PC-9 (cell line): ENCODE measurements at regions of chr2 and their contacts with region 1.

Region 1: GRCh38 chr2:181953881-181954537 is 31.6 kb upstream of the PPP1R1C start:
- DNase-seq: peak in 1 of 2 experiments; percentile 80
- H3K4me3 ChIP-seq: no peak overlapping the region
- H3K27ac ChIP-seq: no peak overlapping the region
- H3K4me1 ChIP-seq: peaks cover 18% of the 10 kb centered on the region
- H3K27me3 ChIP-seq: no peaks in the 10 kb centered on the region
- CTCF ChIP-seq: peak; percentile 69

Region 2: GRCh38 chr2:180742809-180743208 is 1211.2 kb before region 1 on chr2:
- CTCF ChIA-PET with region 1: no interaction called
- POLR2A ChIA-PET with region 1: no interaction called
- intact Hi-C with region 1: loop called (anchors 10 kb)
- DNase-seq: peak; percentile 32 to 81
- H3K4me3 ChIP-seq: 0 out of 2 replicates have a peak overlapping the region, but pooled peaks have one; percentile 4
- H3K27ac ChIP-seq: peak overlapping the region; percentile 11
- H3K4me1 ChIP-seq: peaks cover 29% of the 10 kb centered on the region
- H3K27me3 ChIP-seq: no peaks in the 10 kb centered on the region
- CTCF ChIP-seq: no peak

Region 3: DNA sequence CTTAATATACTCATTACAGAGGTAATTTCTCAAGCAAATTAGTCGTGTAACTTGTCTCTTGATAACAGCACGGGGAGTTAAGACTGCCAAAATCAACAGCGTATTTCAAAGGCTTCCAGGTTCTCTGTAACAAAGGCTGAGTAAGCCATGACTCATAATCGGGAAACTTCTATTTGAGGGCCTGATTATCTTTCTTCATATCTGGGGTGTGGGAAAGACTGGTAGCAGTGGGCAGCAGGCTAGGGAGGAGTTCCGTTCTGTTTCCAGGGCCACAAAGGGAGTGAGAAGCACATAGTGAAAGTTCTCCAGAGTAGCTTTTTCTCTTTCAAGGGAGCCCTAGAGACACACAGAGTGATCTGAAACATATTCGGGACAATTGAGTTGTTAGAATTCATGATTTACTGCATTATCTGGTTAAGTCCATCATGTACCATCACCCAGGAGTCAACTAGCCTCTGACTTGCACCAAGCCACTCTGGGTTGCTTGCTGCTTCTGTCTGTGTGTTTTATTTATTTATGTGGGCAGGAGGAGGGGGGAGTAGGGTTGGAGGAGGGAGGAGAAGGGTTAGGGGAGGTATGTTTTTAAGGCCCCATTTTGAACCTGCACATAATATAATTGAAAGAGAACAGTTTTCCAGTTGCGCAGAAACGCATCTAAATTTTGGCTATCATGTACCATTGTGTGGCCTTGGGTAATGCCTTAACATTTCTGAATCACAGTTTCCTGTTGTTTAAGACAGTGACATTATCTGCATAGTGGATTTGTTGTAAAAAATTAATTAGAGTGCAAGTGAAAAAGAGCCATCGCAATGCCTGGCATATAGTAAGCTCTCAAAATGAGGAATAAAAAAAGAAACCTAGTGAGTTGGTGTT is 142.9 kb before region 1 on chr2:
- CTCF ChIA-PET with region 1: no interaction called
- POLR2A ChIA-PET with region 1: no interaction called
- intact Hi-C with region 1: loop called (anchors 1 kb)
- DNase-seq: peak; percentile 81 to 98
- H3K4me3 ChIP-seq: no peak overlapping the region
- H3K27ac ChIP-seq: peak overlapping the region; percentile 74
- H3K4me1 ChIP-seq: peaks cover 32% of the 10 kb centered on the region
- H3K27me3 ChIP-seq: no peaks in the 10 kb centered on the region
- CTCF ChIP-seq: no peak

Region 4: DNA sequence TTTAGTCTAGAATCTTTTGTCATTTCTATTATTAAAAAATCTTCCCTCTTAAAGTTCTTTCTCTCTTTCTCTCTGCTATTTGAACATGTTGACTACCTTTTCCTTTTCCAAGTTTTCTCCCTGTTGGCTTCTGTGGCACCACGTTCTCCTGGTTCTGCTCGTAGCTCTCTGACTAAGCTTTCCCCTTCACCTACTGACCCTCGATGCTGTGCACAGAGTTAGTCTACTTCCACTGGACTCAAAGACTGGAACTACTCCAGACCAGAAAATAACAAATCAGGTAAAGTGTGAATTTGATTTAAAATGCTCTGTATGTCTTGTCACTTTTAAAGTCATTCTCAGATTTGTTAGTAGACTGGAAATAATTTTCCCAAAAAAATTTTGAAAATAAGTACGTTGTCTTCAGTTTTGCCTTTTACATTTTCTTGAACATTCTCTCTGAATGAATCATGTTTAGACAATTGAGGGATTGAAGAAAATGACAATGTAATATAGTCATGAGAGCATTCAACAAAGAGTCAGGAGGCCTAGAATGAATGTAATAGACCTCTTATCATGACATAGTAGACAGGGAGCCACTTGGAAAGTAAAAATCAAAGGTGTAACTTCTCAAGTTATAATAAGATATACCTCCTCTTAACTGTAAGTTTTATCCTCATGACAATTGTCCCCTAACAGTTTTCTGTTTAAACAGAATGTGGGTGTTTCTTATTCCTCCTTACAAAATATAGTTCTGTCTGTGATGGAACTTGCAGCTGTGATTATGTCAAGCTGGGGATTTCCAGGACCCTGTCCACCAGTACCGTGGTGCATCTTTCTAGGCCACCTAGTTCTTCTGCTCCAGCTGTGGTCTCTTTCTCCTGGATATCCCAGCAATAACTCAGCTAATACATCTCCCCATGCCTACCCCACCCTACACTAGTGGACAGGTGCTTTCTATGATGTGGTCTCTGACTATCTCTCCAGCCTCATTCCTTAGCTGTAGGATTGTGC is 37.0 kb before region 1 on chr2:
- CTCF ChIA-PET with region 1: interaction called, 5 read pairs
- POLR2A ChIA-PET with region 1: no interaction called
- intact Hi-C with region 1: loop called (anchors 2 kb)
- DNase-seq: no peak
- H3K4me3 ChIP-seq: no peak overlapping the region
- H3K27ac ChIP-seq: peak overlapping the region; percentile 1; the same call in 1 of the 2 replicates
- H3K4me1 ChIP-seq: no peaks in the 10 kb centered on the region
- H3K27me3 ChIP-seq: no peaks in the 10 kb centered on the region
- CTCF ChIP-seq: no peak

Region 5: GRCh38 chr2:182077451-182078142 is 123.6 kb after region 1 on chr2:
- CTCF ChIA-PET with region 1: interaction called, 8 read pairs
- POLR2A ChIA-PET with region 1: no interaction called
- intact Hi-C with region 1: loop called (anchors 2 kb)
- DNase-seq: peak; percentile 47 to 76
- H3K4me3 ChIP-seq: no peak overlapping the region
- H3K27ac ChIP-seq: no peak overlapping the region
- H3K4me1 ChIP-seq: 0 out of 2 replicates have a peak, but pooled peaks cover 4% of the 10 kb centered on the region
- H3K27me3 ChIP-seq: no peaks in the 10 kb centered on the region
- CTCF ChIP-seq: peak; percentile 98